ENCODE measurements at regions of chr2 and their contacts with region 1.

Region 1: DNA sequence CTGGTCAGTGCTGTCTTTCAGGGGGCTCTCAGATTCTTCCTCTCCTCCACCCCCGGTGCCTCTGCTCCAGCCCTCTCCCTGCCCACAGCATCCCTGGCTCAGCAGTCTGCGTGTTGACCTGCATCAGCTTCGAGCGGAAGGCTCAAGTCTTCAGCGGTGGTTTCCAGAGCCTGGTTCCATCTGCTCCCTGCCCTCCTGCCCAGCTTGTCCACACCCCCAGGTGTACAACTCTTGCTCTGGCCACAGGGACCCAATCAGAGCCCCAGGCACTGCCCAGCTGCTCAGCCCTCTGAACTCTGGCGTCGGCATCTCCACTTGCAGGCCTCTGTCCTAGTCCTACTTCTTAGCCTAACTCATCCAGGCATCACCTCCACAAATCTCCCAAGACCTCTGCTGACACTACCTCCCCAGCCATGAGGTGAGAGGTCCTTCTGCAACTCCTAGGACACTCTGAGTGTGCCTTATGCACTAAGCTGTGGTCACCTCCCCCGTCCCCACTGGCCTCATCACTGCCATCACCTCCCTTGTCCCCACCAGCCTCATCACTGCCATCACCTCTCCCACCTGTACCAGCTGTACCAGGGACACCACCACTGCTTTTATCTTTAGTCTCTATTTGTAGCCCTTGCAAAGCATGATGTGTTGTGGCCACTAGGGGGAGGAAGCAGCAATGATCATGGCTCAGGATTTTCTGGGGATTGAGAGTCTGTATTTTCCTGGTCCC is 60.9 kb downstream of the EDAR start:
- DNase-seq: no peak
- H3K4me3 ChIP-seq: no peak overlapping the region
- H3K27ac ChIP-seq: no peak overlapping the region
- H3K4me1 ChIP-seq: peaks cover 0 to 21% (median 18%) of the 10 kb centered on the region in 4 donors
- H3K27me3 ChIP-seq: no peaks in the 10 kb centered on the region
- CTCF ChIP-seq: peak; percentile 49 to 67 (median 50)
- EP300 ChIP-seq: no peak
- POLR2A ChIP-seq: no peak

Region 2: GRCh38 chr2:109510136-109511028 is 582.3 kb after region 1 on chr2:
- intact Hi-C with region 1: loop called (anchors 10 kb)
- DNase-seq: peak; percentile 95
- H3K4me3 ChIP-seq: no peak overlapping the region
- H3K27ac ChIP-seq: no peak overlapping the region
- H3K4me1 ChIP-seq: peaks cover 13 to 33% (median 21%) of the 10 kb centered on the region in 4 donors
- H3K27me3 ChIP-seq: no peaks in the 10 kb centered on the region
- CTCF ChIP-seq: peak; percentile 88 to 97 (median 94)
- EP300 ChIP-seq: no peak
- POLR2A ChIP-seq: no peak